Mammary epithelial cell (primary cell): ENCODE measurements at regions of chr1 and their contacts with region 1.

Region 1: DNA sequence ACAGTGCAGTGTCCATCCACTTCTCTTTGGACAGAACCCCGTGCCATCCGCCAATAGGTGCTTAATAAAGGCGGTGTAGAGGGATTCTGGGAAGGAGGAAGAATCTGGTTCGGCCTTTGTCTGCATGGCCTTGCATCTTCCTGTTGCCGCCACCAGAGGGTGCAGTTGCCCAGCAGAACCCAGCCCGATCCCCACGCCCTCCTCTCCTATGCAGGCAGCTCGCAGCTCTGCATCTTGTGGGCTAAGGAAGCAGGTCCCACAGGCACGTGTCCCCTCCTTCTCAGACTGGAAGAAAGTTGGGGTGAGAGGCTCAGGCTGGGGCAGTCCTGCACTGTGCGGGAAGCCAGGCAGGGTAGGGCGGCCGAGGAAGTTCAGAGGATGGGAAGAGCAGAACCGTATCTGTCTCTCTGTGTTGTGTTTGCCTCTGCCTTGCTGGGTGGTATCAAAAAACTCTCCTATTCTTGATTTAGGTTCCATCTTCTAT is 20.8 kb downstream of the NAV1 start:
- DNase-seq: peak; percentile 54
- H3K4me3 ChIP-seq: no peak overlapping the region
- H3K27ac ChIP-seq: no peak overlapping the region
- H3K4me1 ChIP-seq: peaks cover 11% of the 10 kb centered on the region
- H3K27me3 ChIP-seq: no peaks in the 10 kb centered on the region
- CTCF ChIP-seq: peak; percentile 93

Region 2: DNA sequence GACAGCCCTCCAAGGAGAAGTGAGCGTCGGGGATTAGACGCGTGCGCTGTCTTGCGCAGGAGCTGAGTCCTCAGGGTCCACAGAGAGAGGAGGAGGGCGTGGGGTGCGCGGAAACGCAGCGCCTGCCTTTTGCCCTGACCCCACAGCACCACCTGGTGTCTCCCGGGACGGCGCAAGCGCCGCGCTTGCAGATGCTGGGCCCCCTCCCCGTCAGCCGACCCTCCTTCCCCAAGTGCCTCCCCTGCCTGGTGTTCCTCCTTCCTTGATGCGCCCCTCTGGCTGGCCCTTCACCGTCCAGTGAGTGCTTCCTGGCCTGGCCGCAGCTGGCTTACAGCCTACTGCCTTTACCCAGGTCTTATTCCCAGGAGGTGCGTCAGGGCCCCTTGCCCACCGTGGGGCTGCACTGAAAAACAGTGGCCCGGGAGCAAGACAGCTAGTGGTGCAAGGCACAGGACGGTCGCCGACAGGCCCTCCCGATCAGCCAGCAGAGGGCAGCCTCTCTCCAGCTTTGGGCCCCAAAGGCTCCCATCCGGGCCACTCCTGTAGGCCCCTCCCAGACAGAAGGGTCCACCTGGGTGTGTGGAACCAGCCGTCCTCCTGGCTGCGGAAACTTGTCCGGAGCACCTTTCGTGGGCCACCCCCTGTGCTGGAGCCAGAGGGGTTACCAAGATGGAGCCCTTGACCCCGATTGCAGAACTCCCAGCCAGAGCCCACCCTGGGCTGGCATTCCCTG is 77.8 kb before region 1 on chr1:
- CTCF ChIA-PET with region 1: no interaction called
- dilution Hi-C with region 1: loop called (anchors 5 kb)
- in situ Hi-C with region 1: no loop called
- intact Hi-C with region 1: loop called (anchors 5 kb)
- DNase-seq: peak; percentile 68
- H3K4me3 ChIP-seq: peak overlapping the region in 1 of 3 experiments; percentile 7
- H3K27ac ChIP-seq: no peak overlapping the region
- H3K4me1 ChIP-seq: peaks cover 30% of the 10 kb centered on the region
- H3K27me3 ChIP-seq: no peaks in the 10 kb centered on the region
- CTCF ChIP-seq: peak; percentile 71 to 90

Region 3: GRCh38 chr1:201530741-201531531 is 28.8 kb before region 1 on chr1:
- CTCF ChIA-PET with region 1: no interaction called
- dilution Hi-C with region 1: no loop called
- in situ Hi-C with region 1: no loop called
- intact Hi-C with region 1: loop called (anchors 1 kb)
- DNase-seq: peak; percentile 70
- H3K4me3 ChIP-seq: no peak overlapping the region
- H3K27ac ChIP-seq: no peak overlapping the region
- H3K4me1 ChIP-seq: peaks cover 15% of the 10 kb centered on the region
- H3K27me3 ChIP-seq: no peaks in the 10 kb centered on the region
- CTCF ChIP-seq: peak; percentile 86 to 88

Region 4: GRCh38 chr1:201703621-201704439 is 144.1 kb after region 1 on chr1:
- CTCF ChIA-PET with region 1: no interaction called
- dilution Hi-C with region 1: no loop called
- in situ Hi-C with region 1: loop called (anchors 5 kb)
- intact Hi-C with region 1: loop called (anchors 1 kb)
- DNase-seq: peak; percentile 54
- H3K4me3 ChIP-seq: no peak overlapping the region
- H3K27ac ChIP-seq: no peak overlapping the region
- H3K4me1 ChIP-seq: no peaks in the 10 kb centered on the region
- H3K27me3 ChIP-seq: no peaks in the 10 kb centered on the region
- CTCF ChIP-seq: peak; percentile 86 to 98

Region 5: DNA sequence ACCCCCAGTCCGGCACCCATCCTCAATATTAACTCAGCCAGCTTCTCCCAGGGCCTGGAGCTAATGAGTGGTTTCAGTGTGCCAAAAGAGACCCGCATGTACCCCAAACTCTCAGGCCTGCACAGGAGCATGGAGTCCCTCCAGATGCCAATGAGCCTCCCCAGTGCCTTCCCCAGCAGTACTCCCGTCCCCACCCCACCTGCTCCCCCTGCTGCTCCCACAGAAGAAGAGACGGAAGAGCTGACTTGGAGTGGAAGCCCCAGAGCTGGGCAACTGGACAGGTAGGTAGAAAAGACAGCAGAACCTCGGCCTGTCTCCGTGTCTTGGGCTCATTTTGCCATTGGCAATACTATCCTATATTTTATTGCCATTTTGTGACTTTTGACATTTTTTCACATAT is 223.9 kb after region 1 on chr1:
- CTCF ChIA-PET with region 1: no interaction called
- dilution Hi-C with region 1: no loop called
- in situ Hi-C with region 1: loop called (anchors 5 to 10 kb)
- intact Hi-C with region 1: no loop called
- DNase-seq: no peak
- H3K4me3 ChIP-seq: no peak overlapping the region
- H3K27ac ChIP-seq: no peak overlapping the region
- H3K4me1 ChIP-seq: peaks cover 27% of the 10 kb centered on the region
- H3K27me3 ChIP-seq: no peaks in the 10 kb centered on the region
- CTCF ChIP-seq: peak in 1 of 2 donors; percentile 5

Region 6: GRCh38 chr1:201807958-201808632 is 248.4 kb after region 1 on chr1:
- CTCF ChIA-PET with region 1: no interaction called
- dilution Hi-C with region 1: loop called (anchors 5 kb)
- in situ Hi-C with region 1: no loop called
- intact Hi-C with region 1: no loop called
- DNase-seq: no peak
- H3K4me3 ChIP-seq: no peak overlapping the region
- H3K27ac ChIP-seq: no peak overlapping the region
- H3K4me1 ChIP-seq: no peaks in the 10 kb centered on the region
- H3K27me3 ChIP-seq: no peaks in the 10 kb centered on the region
- CTCF ChIP-seq: no peak